GM12878 (cell line): ENCODE measurements at regions of chr17 and their contacts with region 1.

Region 1: DNA sequence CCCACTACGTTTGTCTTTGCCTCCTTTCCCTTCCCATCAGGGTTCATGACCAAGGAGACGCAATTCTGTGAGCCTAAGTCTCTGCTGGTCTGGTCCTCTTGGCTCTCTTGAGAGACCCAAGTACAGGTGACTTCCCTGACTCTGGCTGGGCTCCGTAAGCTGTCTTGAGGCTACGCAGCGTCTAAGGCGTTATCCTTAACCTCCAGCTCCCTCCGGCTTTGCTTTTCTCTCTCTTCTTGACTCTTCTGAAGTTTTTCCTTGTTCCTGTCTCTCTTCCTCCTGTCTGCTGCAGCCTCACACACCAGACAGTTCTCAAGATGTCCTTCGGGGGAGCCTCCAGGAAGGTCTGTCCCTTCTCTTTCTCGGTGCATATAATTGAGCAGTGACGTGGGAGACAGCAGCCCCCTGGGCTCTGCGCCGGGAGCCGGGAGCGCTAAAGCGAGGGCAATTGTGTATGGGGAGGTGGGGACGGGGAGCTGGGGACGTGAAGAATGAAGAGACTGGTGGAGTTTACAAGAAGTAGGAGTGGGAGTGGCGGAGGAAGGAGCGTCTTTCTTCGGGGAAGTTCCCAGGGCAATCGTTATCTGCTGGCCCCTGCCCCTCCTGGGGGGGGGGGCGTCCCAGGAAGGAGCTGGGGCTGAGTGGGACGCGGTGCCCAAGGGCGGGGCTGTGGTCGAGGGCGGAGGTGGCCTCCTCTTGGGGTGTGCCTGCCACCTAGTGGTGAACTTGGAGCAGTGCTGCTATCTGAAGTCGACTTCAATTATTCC is 6.9 kb upstream of the PIRT start:
- DNase-seq: peak; percentile 5
- ATAC-seq: peak; percentile 99
- H3K4me3 ChIP-seq: 0 out of 2 replicates have a peak overlapping the region, but pooled peaks have one; percentile 9
- H3K27ac ChIP-seq: no peak overlapping the region
- H3K4me1 ChIP-seq: no peaks in the 10 kb centered on the region
- H3K27me3 ChIP-seq: no peaks in the 10 kb centered on the region; a peak in 1 of 4 replicates
- CTCF ChIP-seq: peak; percentile 81 to 93 (median 84)
- EP300 ChIP-seq: no peak
- POLR2A ChIP-seq: no peak
- RAD21 ChIP-seq: peak; percentile 72

Region 2: GRCh38 chr17:10737168-10737622 is 107.6 kb before region 1 on chr17:
- CTCF ChIA-PET with region 1: interaction called, 12 read pairs
- POLR2A ChIA-PET with region 1: no interaction called
- RAD21 ChIA-PET with region 1: interaction called, 3 read pairs
- SMC1A ChIA-PET with region 1: interaction called, 3 read pairs
- in situ Hi-C with region 1: loop called (anchors 5 kb)
- intact Hi-C with region 1: loop called (anchors 1 kb)
- DNase-seq: no peak
- ATAC-seq: peak; percentile 67
- H3K4me3 ChIP-seq: no peak overlapping the region
- H3K27ac ChIP-seq: no peak overlapping the region
- H3K4me1 ChIP-seq: no peaks in the 10 kb centered on the region
- H3K27me3 ChIP-seq: no peaks in the 10 kb centered on the region; a peak in 1 of 4 replicates
- CTCF ChIP-seq: peak; percentile 64 to 66 (median 66)
- EP300 ChIP-seq: no peak
- POLR2A ChIP-seq: no peak
- RAD21 ChIP-seq: peak; percentile 70

Region 3: DNA sequence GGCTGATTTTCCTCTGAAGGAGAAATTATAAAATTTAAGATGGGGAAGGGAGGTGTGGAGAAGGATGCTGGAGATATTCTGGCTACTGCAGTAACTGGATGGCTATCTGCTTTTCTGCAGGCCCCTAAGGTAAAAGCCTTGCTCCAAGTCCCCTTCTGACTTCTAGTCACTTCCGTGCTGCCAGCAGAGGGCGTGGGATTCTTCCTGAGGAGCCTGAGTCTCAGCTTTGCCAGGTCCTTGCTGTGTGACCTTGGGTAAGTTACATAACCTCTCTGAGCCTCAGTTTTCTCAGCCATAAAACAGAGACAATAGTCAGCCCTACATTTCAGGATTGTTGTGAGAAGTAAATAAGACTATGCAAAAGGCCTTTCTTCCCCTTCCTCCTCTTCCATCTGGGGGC is 90.7 kb before region 1 on chr17:
- CTCF ChIA-PET with region 1: interaction called, 4 read pairs
- POLR2A ChIA-PET with region 1: no interaction called
- RAD21 ChIA-PET with region 1: no interaction called
- SMC1A ChIA-PET with region 1: no interaction called
- in situ Hi-C with region 1: no loop called
- intact Hi-C with region 1: loop called (anchors 5 kb)
- DNase-seq: no peak
- ATAC-seq: peak; percentile 48; the same call in 2 of the 3 replicates
- H3K4me3 ChIP-seq: no peak overlapping the region
- H3K27ac ChIP-seq: no peak overlapping the region
- H3K4me1 ChIP-seq: no peaks in the 10 kb centered on the region
- H3K27me3 ChIP-seq: no peaks in the 10 kb centered on the region
- CTCF ChIP-seq: peak; percentile 25 to 43 (median 39); a peak in 4 of 6 replicates
- EP300 ChIP-seq: no peak
- POLR2A ChIP-seq: no peak
- RAD21 ChIP-seq: 0 out of 2 replicates have a peak, but pooled peaks have one; percentile 7

Region 4: GRCh38 chr17:10772425-10773380 is 72.1 kb before region 1 on chr17:
- CTCF ChIA-PET with region 1: interaction called, 11 read pairs
- POLR2A ChIA-PET with region 1: no interaction called
- RAD21 ChIA-PET with region 1: interaction called, 3 read pairs
- SMC1A ChIA-PET with region 1: no interaction called
- in situ Hi-C with region 1: no loop called
- intact Hi-C with region 1: no loop called
- DNase-seq: no peak
- ATAC-seq: no peak
- H3K4me3 ChIP-seq: no peak overlapping the region
- H3K27ac ChIP-seq: no peak overlapping the region
- H3K4me1 ChIP-seq: no peaks in the 10 kb centered on the region
- H3K27me3 ChIP-seq: no peaks in the 10 kb centered on the region
- CTCF ChIP-seq: peak; percentile 20 to 81 (median 77); a peak in 5 of 6 replicates
- EP300 ChIP-seq: no peak
- POLR2A ChIP-seq: no peak
- RAD21 ChIP-seq: no peak